Left ventricle myocardium superior (tissue), 1 donor: ENCODE measurements at regions of chr3 and their contacts with region 1.

Region 1: GRCh38 chr3:138068579-138069174 is 46.7 kb downstream of the DZIP1L start:
- DNase-seq: peak; percentile 83
- ATAC-seq: peak; percentile 95

Region 2: GRCh38 chr3:138118612-138119422 is 50.1 kb after region 1 on chr3:
- intact Hi-C with region 1: loop called (anchors 1 kb)
- DNase-seq: peak; percentile 76
- ATAC-seq: peak; percentile 46

Region 3: GRCh38 chr3:138726946-138727730 is 658.5 kb after region 1 on chr3:
- intact Hi-C with region 1: no loop called
- DNase-seq: no peak
- ATAC-seq: no peak